ENCODE measurements at regions of chr1 and their contacts with region 1.

Region 1: GRCh38 chr1:159891275-159892157 is 8.4 kb downstream of the CFAP45 start:
- DNase-seq: peak; percentile 87
- ATAC-seq: peak; percentile 98
- H3K4me3 Mint-ChIP-seq: no peak overlapping the region
- H3K27ac Mint-ChIP-seq: no peak overlapping the region
- H3K4me1 Mint-ChIP-seq: peaks cover 14% of the 10 kb centered on the region
- H3K27me3 Mint-ChIP-seq: no peaks in the 10 kb centered on the region
- CTCF ChIP-seq: peak; percentile 99

Region 2: DNA sequence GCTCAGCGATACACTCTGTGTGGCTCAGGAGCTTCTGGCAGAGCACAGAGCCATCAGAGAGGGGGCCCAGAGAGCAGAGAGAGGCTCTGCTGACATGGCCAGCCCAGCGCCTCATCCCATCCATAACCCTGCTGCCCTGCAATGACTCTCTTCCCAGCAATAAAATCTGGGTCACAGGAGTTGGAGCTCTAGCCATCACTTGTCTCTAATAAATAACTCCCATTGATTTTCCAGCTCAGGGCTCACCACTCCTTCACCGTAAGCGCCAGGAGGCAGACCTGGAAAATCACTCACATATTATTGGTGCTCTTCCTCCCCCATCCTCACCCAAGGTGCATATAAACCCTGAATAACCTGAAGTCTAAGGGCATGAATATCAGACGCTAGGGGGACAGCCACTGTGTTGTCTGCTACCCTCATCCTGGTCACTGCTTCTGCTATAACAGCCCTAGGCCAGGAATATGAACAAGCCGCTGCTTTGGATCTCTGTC is 304.0 kb before region 1 on chr1 and contains the start of gene APCS:
- CTCF ChIA-PET with region 1: no interaction called
- POLR2A ChIA-PET with region 1: no interaction called
- intact Hi-C with region 1: no loop called
- DNase-seq: no peak
- ATAC-seq: no peak
- H3K4me3 Mint-ChIP-seq: no peak within 1 kb of the TSS
- H3K27ac Mint-ChIP-seq: no peak within 1 kb of the TSS
- H3K4me1 Mint-ChIP-seq: no peaks in the 10 kb centered on the region
- H3K27me3 Mint-ChIP-seq: peaks cover 23% of the 10 kb centered on the region
- CTCF ChIP-seq: no peak
- total RNA-seq, gene APCS: not detected

Region 3: DNA sequence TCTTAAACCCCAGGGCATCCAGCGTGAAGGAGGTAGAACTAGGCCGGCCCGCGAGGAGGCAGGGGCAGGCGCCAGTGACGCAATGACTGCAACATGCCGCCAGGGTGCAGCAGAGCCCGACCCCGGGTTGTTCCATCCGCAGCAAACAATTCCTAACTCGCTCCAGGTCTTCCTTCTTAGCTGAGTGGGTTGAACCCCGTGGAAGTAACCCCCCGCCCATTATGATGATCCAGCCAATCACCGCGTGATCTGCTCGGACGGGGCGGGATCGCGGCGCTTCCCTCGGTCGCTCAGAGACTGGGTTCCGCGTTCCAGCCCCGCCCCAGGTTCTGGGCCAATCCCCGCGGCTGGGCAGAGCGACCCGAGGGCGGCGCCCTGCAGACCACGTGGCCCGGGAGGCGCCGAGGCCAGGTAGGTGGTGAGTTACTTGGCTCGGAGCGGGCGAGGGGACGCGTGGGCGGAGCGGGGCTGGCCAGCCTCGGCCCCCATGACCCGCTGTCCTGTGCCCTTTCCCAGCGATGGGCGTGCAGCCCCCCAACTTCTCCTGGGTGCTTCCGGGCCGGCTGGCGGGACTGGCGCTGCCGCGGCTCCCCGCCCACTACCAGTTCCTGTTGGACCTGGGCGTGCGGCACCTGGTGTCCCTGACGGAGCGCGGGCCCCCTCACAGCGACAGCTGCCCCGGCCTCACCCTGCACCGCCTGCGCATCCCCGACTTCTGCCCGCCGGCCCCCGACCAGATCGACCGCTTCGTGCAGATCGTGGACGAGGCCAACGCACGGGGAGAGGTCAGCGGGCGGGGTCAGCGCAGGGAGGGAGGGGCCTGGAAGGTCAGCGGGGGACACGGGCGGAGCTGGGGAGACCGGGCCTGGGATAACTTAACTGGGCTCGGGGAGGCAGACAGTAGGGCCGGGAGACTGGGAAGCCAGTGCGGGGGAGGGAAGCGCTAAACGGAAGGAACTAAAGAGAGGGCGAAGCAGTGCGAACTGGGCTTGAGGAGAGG is 110.6 kb before region 1 on chr1 and contains the start of gene DUSP23:
- CTCF ChIA-PET with region 1: interaction called, 64 read pairs
- POLR2A ChIA-PET with region 1: no interaction called
- intact Hi-C with region 1: loop called (anchors 5 kb)
- DNase-seq: peak; percentile 96
- ATAC-seq: peak; percentile 99
- H3K4me3 Mint-ChIP-seq: peak within 1 kb of the TSS; percentile 73
- H3K27ac Mint-ChIP-seq: peak within 1 kb of the TSS; percentile 44
- H3K4me1 Mint-ChIP-seq: peaks cover 7% of the 10 kb centered on the region
- H3K27me3 Mint-ChIP-seq: no peaks in the 10 kb centered on the region
- CTCF ChIP-seq: peak; percentile 85
- total RNA-seq, gene DUSP23: 27.2 TPM

Region 4: DNA sequence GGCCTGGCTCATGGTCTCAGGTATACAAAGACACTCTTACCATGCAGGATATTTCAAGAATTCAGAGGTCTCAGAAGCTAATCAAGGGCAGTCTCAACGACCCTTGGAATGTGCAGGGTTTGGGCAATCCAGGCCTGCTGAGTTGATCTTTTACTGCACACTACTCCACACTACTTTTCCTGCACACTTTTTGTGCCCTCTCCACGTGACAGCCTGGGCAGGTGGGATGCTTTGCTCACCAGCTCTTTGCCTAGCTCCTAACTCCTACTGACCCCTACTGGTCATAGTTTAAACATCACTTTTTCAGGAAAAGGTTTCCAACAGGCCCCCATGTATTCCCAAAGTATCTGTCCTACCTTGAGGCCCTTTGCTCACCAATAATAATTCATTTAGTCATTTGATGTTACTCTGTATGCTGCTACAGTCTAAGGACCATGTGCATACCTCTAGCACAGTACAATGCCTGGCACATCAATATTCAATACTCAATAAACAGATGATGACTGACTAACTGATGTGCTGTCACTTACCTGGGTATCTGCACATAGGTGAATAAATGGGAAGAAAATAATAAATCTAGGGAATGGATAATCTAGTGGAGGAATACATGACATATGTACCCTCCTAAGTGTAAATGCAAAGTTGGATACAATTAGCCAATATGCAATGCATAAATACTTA is 101.1 kb before region 1 on chr1:
- CTCF ChIA-PET with region 1: interaction called, 482 read pairs
- POLR2A ChIA-PET with region 1: interaction called, 3 read pairs
- intact Hi-C with region 1: no loop called
- DNase-seq: no peak
- ATAC-seq: peak; percentile 47
- H3K4me3 Mint-ChIP-seq: no peak overlapping the region
- H3K27ac Mint-ChIP-seq: no peak overlapping the region
- H3K4me1 Mint-ChIP-seq: no peaks in the 10 kb centered on the region
- H3K27me3 Mint-ChIP-seq: peaks cover 4% of the 10 kb centered on the region
- CTCF ChIP-seq: peak; percentile 66

Region 5: DNA sequence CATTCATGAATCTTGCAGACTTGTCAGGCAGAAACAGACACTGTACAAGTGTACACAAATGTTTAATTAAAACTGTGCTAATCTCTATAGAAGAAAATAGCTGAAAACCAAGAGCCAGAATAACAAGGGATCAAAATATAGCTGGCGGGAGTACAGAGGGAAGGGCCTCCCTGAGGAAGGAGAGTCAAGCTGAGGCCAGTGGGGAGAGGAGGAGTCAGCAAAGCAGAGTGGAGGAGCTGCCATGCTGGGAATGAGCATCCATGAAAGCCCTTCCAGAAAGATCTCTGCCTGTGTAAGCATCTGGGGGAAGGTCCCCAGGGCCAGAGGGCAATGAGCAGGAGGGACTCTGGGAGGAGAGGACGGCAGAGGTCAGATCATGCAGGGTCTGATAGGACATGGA is 49.8 kb before region 1 on chr1:
- CTCF ChIA-PET with region 1: interaction called, 10 read pairs
- POLR2A ChIA-PET with region 1: no interaction called
- intact Hi-C with region 1: no loop called
- DNase-seq: no peak
- ATAC-seq: no peak
- H3K4me3 Mint-ChIP-seq: no peak overlapping the region
- H3K27ac Mint-ChIP-seq: no peak overlapping the region
- H3K4me1 Mint-ChIP-seq: peaks cover 7% of the 10 kb centered on the region
- H3K27me3 Mint-ChIP-seq: no peaks in the 10 kb centered on the region
- CTCF ChIP-seq: no peak

Region 6: DNA sequence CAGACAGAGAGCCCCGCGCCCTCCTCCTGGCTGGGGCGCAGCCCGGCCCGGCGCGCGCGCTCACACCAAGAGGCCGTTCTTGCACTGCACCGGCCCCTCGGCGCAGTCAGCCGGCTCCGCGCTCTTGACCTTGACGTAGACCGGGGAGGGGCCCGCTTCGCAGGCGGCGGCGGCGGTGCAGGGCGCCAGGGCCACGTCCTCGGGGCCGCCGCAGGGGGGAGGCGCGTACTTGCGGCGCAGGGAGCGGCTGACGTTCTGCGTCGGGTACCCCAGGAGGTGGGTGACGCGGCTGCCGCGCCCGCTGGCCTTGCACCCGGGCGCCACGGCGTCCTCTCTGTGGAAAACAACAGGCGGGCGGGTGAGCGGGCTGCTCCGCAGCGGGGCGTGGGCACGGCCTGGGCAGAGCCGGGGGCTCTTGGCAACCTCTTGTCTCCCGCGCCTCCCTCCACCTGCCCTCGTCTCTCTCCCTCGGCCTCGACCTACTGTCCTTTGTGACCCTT is 36.8 kb before region 1 on chr1:
- CTCF ChIA-PET with region 1: interaction called, 28 read pairs
- POLR2A ChIA-PET with region 1: interaction called, 3 read pairs
- intact Hi-C with region 1: no loop called
- DNase-seq: peak; percentile 83
- ATAC-seq: peak; percentile 95
- H3K4me3 Mint-ChIP-seq: peak overlapping the region; percentile 77
- H3K27ac Mint-ChIP-seq: peak overlapping the region; percentile 80
- H3K4me1 Mint-ChIP-seq: peaks cover 23% of the 10 kb centered on the region
- H3K27me3 Mint-ChIP-seq: no peaks in the 10 kb centered on the region
- CTCF ChIP-seq: peak; percentile 11

Measured in activated CD8-positive, alpha-beta T cell treated with anti-CD3 and anti-CD28 coated beads for 36 hours (primary cell).